ENCODE measurements at regions of chr10 and their contacts with region 1.

Region 1: GRCh38 chr10:32308027-32308603 is 38.8 kb downstream of the EPC1 start:
- DNase-seq: no peak
- ATAC-seq: peak; percentile 92
- H3K4me3 ChIP-seq: no peak overlapping the region
- H3K27ac ChIP-seq: no peak overlapping the region
- H3K4me1 ChIP-seq: no peaks in the 10 kb centered on the region
- H3K27me3 ChIP-seq: no peaks in the 10 kb centered on the region
- CTCF ChIP-seq: no peak
- EP300 ChIP-seq: no peak
- POLR2A ChIP-seq: no peak
- RAD21 ChIP-seq: no peak

Region 2: DNA sequence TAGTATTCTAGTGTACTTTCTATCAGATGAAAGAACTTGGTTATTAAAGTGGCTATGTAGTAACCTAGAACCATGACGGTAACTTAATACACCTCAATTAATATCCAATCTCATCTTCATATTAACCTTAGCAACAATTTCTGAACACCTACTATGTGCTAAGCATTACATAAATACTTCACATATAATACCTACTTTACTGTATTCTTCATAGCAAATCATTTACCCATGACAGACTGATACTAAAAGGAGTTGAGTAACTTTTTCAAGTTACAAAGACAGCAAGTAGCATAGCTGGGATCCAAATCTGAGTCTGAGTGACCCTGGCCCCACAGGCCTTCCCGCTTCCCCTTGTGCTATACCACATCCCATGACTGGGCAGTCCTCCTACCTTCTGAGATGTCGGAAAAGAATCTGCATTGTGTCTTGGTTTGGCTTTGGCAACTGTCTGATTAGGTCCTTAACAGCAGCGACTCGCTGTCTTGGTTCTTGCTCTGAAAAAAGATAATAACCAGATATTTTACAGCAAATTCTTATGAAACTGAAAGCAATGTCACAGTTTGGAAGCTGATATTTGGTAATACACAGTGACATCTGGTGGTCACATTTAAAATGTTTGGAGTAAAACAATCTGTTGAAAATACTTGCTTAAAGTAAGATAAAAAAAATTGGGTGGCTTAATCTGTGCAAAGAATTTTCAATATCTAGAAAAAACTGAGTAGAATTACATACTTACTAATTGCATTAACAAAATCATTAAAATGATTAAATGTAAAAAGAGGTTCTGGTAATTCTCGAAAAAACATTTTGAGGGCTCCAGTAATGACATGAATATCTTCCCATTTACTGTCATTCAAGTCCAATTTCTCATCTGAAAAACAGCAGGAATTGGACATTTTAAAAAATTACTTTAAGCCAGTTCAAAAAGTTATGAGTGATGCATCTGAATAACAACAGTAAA is 499.6 kb before region 1 on chr10:
- CTCF ChIA-PET with region 1: no interaction called
- POLR2A ChIA-PET with region 1: no interaction called
- RAD21 ChIA-PET with region 1: no interaction called
- SMC1A ChIA-PET with region 1: no interaction called
- in situ Hi-C with region 1: no loop called
- intact Hi-C with region 1: no loop called
- DNase-seq: peak; percentile 49
- ATAC-seq: peak; percentile 96
- H3K4me3 ChIP-seq: no peak overlapping the region
- H3K27ac ChIP-seq: peak overlapping the region; percentile 77
- H3K4me1 ChIP-seq: peaks cover 3% of the 10 kb centered on the region
- H3K27me3 ChIP-seq: no peaks in the 10 kb centered on the region
- CTCF ChIP-seq: peak; percentile 27 to 59 (median 42); a peak in 5 of 6 replicates
- EP300 ChIP-seq: no peak
- POLR2A ChIP-seq: no peak
- RAD21 ChIP-seq: peak; percentile 78

Region 3: GRCh38 chr10:32338262-32338661 is 30.1 kb after region 1 on chr10:
- CTCF ChIA-PET with region 1: interaction called, 3 read pairs
- POLR2A ChIA-PET with region 1: interaction called, 4 read pairs
- RAD21 ChIA-PET with region 1: no interaction called
- SMC1A ChIA-PET with region 1: interaction called, 205 read pairs
- in situ Hi-C with region 1: no loop called
- intact Hi-C with region 1: loop called (anchors 5 kb)
- DNase-seq: no peak
- ATAC-seq: no peak
- H3K4me3 ChIP-seq: no peak overlapping the region
- H3K27ac ChIP-seq: no peak overlapping the region
- H3K4me1 ChIP-seq: peaks cover 16% of the 10 kb centered on the region
- H3K27me3 ChIP-seq: no peaks in the 10 kb centered on the region
- CTCF ChIP-seq: no peak
- EP300 ChIP-seq: no peak
- POLR2A ChIP-seq: no peak
- RAD21 ChIP-seq: no peak